Activated CD4-positive, alpha-beta T cell treated with anti-CD3 and anti-CD28 coated beads for 36 hours (primary cell): ENCODE measurements at regions of chr14 and their contacts with region 1.

Region 1: DNA sequence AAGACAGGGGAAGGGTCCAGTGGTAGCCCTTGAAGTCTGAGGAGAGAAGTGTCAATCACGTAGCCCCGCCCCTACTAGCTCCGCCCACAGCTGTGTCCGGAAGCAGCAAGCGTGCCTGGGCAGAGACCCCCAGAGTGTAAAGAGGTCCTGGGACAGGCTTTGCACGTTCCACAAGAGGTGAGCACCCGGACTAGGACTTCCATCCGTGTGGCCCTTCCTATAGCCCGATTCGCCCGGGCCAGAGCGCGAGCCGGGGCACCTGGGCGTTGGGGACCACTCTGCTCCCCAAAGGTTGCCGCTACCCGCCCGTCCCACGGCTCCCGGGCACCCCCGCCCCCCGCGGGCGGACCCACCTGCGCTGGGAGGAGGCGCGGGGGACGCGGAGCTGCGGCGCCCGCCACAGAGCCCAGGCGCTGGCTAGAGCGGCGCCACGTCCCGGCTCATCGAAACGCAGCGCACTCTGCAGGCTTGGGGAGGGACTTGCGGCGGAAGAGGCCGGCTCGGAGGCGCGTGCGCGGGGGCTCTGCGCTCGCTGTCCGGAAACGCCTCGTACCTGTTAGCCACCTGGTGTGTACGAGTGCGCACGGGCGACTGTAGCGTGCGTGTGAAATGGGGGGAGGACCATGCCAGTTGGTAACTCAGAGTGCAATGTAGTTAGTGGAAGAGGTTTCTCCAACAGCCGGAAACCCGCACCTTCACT is at the start of gene RABGGTA:
- DNase-seq: peak; percentile 94
- ATAC-seq: peak; percentile 85
- H3K4me3 Mint-ChIP-seq: peak within 1 kb of the TSS; percentile 83
- H3K27ac Mint-ChIP-seq: peak within 1 kb of the TSS; percentile 97
- H3K4me1 Mint-ChIP-seq: peaks cover 46% of the 10 kb centered on the region
- H3K27me3 Mint-ChIP-seq: no peaks in the 10 kb centered on the region
- total RNA-seq, gene RABGGTA: 52.1 to 56.0 TPM

Region 2: DNA sequence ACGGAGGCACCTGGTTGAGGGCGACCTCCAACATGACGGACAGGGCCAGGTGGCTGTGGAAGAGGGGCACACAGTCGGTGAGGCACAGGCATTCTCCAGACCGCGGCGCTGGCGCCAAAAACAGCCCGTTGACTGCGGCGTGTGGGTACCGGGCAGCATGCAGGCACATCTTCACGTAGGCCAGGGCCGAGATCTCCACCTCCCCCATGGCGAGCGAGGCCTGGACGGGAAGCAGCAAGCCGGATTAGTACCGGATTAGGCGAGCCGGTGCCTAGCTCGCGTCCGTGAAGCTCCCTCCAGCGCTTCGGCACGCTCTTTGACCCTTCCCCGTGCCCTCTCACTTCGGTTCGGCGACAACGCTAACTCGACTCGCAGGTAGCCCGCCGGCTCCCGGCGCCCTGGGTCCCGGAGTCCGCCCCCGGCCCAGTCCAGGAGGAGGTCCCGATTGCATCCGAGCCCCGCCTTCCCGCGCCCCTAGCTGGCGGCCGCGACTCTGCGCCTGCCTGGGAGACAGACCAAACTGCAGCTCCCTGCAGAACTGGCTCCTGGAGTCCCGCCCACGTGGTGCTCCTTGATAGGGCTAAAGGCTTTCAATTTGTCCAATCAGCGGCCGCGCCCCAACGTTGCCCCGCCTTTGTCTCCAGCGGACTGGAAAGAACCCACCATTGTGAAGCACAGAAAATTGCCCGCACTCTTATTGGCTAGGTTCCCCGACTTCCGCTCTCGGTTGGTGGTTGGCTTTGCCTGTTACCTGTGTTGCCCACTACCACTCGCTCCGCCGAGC is 130.0 kb before region 1 on chr14 and contains the start of gene EMC9:
- CTCF ChIA-PET with region 1: interaction called, 4 read pairs
- POLR2A ChIA-PET with region 1: no interaction called
- intact Hi-C with region 1: loop called in 1 of 2 experiments (anchors 1 kb)
- DNase-seq: peak; percentile 100
- ATAC-seq: peak; percentile 87
- H3K4me3 Mint-ChIP-seq: peak within 1 kb of the TSS; percentile 88
- H3K27ac Mint-ChIP-seq: peak within 1 kb of the TSS; percentile 97
- H3K4me1 Mint-ChIP-seq: peaks cover 66% of the 10 kb centered on the region
- H3K27me3 Mint-ChIP-seq: no peaks in the 10 kb centered on the region
- total RNA-seq, gene EMC9: 36.9 to 46.7 TPM

Region 3: DNA sequence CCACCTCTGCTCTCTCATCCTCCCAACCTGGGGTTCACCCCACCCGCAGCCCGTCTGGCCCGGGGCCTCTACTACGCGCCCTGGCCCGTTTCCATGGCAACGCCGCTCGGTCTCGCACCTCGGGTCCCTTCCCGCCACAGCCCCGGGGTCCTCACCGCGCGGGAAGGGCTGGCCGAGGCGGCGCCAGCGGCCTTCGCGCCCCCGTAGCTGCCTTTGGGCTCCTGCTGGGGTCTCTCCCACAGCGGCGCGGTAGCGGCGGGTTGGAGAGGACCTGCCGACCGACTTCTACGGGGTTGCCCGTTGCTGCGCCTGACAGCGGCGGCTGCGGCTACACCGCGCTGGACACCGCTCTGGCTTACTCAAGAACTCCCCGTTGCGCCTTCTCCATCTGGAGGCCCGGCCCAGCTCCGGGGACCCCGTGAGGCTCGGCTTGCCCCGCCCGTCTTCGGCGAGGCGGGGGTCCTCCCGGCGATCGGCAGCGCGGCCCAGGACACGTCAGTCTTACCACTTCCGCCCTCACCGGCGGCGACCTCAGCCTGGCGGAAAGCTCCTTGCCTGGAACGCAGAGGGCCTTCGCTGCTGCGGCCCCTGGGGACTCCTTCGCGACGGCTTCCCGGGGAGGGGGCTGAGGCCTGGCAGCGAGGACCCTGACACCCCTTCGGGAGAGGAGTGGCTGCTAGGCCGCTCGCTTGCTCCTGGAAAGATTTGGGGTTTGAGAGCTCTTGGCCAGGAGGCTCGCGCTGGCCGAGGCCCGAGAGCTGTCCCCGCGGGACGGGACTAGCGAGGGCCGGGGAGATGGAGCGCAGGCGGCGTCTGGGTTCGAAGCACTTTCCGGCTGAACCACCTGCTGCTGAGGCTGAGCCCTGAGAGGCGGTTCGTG is 75.9 kb before region 1 on chr14 and contains the start of gene TM9SF1:
- CTCF ChIA-PET with region 1: interaction called, 6 read pairs
- POLR2A ChIA-PET with region 1: interaction called, 4 read pairs
- intact Hi-C with region 1: loop called in 1 of 2 experiments (anchors 1 kb)
- DNase-seq: peak; percentile 93
- ATAC-seq: peak; percentile 93
- H3K4me3 Mint-ChIP-seq: peak within 1 kb of the TSS; percentile 90
- H3K27ac Mint-ChIP-seq: peak within 1 kb of the TSS; percentile 93
- H3K4me1 Mint-ChIP-seq: peaks cover 50% of the 10 kb centered on the region
- H3K27me3 Mint-ChIP-seq: no peaks in the 10 kb centered on the region
- total RNA-seq, gene TM9SF1: 17.0 to 24.4 TPM

Region 4: DNA sequence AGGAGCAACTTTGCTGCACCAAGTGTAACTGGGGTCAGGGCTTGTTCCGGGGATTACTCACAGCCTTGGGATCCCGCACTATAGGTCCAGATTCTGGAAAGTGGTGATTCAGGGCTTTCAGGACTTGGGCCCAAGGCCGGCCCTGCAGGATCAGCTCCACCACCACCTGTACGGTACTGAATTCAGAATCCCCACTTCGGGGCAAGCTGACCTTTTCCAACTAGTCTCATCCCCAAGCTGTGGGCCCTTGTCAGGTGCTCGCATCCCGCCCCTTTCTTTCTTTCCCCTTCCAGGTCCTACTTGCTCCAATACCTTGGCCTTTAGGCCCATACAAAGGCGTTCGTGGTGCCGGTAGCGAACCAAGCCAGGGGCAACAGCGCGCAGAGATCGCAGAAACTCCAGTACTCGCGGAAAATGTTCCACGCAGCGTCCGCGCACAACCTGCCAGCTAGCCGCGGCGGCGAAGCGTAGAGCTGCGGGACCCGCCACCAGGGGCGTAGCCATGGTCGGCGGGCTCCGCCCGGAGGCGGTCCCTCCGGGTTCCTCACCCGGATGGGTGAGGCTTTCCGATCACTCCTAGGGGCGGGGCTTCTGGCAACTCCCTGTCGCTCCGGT is 29.3 kb before region 1 on chr14:
- CTCF ChIA-PET with region 1: interaction called, 25 read pairs
- POLR2A ChIA-PET with region 1: interaction called, 12 read pairs
- intact Hi-C with region 1: loop called (anchors 1 kb)
- DNase-seq: peak; percentile 97
- ATAC-seq: peak; percentile 83
- H3K4me3 Mint-ChIP-seq: peak overlapping the region; percentile 94
- H3K27ac Mint-ChIP-seq: peak overlapping the region; percentile 99
- H3K4me1 Mint-ChIP-seq: peaks cover 55% of the 10 kb centered on the region
- H3K27me3 Mint-ChIP-seq: no peaks in the 10 kb centered on the region

Region 5: DNA sequence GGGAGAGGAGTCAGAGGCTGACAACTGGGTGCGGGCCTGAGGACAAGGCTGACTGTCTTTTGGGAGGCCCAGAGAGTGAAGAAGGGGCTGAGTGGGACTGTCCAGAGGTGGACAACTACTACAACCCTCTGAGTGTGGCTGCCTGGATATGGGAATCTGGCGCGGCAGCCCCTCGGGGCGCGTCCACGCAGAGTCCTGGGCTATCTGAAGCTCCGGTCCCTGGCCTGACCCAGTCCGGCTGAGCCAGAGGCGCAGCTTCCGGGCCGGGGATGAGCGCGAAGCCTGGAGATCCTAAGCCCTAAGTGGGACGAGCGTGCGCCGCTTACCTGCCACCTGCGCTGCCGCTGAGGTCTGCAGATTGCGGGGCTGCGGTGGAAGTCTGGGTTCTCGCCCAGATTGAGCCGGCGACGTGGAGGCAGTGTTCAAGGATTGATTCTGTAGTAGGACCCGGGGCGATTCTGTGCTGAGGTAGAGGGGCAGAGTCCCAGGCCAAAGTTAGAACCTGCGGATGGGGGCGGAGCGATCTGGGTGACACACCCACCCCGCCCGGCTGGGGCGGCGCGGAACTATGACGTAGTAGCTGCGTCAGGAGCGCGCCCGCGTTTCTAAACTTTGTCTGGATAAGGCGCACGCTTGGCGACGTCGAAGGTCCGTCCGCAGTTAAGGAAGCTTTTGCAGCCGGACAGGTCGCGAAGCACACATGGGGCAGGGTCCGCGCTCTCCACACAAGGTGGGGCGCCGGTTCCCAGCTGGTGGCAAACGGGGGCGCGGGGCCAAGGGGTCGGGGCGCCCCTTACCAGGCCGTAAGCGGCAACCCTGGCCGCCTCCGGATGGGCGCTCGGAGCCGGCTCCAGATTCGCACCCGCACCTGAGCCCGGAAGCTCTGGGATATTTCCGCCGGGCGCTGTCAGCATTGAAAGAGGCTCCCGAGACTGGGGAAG is 28.2 kb after region 1 on chr14 and contains the starts of genes DHRS1 and NOP9:
- CTCF ChIA-PET with region 1: interaction called, 26 read pairs
- POLR2A ChIA-PET with region 1: interaction called, 5 read pairs
- intact Hi-C with region 1: loop called (anchors 1 kb)
- DNase-seq: peak; percentile 96
- ATAC-seq: peak; percentile 67
- H3K4me3 Mint-ChIP-seq: peak within 1 kb of the TSS; percentile 91
- H3K27ac Mint-ChIP-seq: peak within 1 kb of the TSS; percentile 77
- H3K4me1 Mint-ChIP-seq: peaks cover 51% of the 10 kb centered on the region
- H3K27me3 Mint-ChIP-seq: no peaks in the 10 kb centered on the region
- total RNA-seq, gene DHRS1: 11.7 to 14.6 TPM
- total RNA-seq, gene NOP9: 24.4 to 32.5 TPM

Region 6: DNA sequence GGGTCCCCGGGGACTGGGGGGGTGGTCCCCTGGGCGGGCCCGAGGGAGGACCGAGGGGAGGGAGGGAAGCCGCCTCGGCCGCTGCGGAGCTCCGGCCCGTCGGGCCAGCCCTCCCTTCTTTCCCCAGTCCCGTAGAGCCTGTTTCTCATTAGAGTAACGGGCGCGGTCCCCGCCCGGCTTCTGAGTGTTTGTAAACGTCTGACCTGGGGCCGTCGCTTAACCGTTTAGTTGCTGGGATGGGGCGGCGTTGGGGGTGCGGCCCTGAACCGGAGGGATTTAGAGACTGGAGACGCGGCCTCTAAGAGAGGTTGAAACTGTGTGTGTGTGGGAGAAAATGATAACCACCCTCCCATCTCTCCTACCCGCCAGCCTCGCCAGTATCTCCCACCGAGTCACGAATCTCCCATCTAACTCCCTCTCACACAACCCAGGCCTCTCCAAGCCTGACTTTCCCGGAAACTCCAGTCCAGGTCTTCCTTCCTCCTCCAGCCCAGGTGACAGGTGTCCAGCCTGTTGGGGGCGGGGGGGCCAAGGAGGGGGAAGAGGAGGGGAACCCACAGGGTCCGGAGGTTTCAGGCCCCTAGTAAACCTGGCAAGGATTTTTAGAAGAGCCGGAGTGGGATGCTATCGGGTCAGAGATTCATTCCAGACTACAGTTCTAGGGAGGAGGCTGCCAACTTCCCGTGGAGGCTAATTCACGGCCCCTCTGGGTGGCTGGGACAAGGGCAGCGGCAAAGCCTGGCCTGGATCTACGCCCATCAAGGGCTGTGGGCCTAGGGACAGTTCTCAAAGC is 95.6 kb after region 1 on chr14:
- CTCF ChIA-PET with region 1: no interaction called
- POLR2A ChIA-PET with region 1: no interaction called
- intact Hi-C with region 1: no loop called
- DNase-seq: peak; percentile 47
- ATAC-seq: peak; percentile 21
- H3K4me3 Mint-ChIP-seq: peak overlapping the region; percentile 23
- H3K27ac Mint-ChIP-seq: no peak overlapping the region
- H3K4me1 Mint-ChIP-seq: peaks cover 28% of the 10 kb centered on the region
- H3K27me3 Mint-ChIP-seq: peaks cover 41% of the 10 kb centered on the region

Region 7: DNA sequence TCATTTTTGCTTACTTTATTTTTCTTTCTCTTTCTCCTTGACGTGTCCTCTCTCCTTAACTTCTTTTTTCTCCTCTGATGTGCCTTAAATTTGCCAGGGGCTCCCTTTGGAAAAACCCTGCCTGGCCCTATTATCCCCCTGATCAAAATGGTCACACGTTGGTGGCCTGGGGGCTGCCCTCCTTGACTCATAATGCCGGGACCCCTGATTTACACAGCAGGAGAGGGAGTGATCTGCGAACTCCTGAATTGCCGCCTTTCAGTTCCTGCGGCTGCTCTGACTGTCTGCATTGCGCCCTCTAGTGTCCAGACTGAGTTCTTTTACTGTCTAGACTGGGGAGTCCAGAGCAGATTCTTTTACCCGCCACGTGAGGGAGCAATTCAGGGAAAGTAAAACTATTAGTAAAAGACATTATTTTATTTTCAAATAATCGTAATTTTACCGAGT is 407.5 kb after region 1 on chr14:
- CTCF ChIA-PET with region 1: no interaction called
- POLR2A ChIA-PET with region 1: no interaction called
- intact Hi-C with region 1: loop called in 1 of 2 experiments (anchors 10 kb)
- DNase-seq: peak; percentile 87
- ATAC-seq: peak; percentile 66
- H3K4me3 Mint-ChIP-seq: peak overlapping the region; percentile 69
- H3K27ac Mint-ChIP-seq: peak overlapping the region; percentile 95
- H3K4me1 Mint-ChIP-seq: peaks cover 61% of the 10 kb centered on the region
- H3K27me3 Mint-ChIP-seq: peaks cover 4% of the 10 kb centered on the region